HEK293 (cell line): ENCODE measurements at regions of chr9 and their contacts with region 1.

Region 1: DNA sequence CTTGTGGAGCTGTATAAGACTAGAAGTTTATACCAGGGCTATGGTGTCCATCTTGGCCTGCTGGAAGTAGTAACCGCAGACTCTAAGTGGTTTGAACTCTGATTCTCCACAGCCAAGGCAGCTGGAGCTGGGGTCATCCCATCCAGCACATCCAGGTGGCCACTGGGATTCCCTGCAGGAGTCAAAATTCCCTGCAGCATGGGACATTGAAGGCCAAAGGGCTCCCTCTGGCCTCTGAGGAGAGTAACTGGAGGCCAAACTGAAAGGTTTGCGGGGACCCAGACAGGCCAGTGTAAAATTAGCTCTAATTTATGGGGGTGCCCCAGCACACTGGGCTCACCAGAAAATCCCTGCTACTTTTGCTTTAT is 12.2 kb upstream of the PRXL2C start:
- H3K4me3 ChIP-seq: no peak overlapping the region
- H3K27ac ChIP-seq: no peak overlapping the region
- H3K4me1 ChIP-seq: no peaks in the 10 kb centered on the region
- CTCF ChIP-seq: no peak

Region 2: DNA sequence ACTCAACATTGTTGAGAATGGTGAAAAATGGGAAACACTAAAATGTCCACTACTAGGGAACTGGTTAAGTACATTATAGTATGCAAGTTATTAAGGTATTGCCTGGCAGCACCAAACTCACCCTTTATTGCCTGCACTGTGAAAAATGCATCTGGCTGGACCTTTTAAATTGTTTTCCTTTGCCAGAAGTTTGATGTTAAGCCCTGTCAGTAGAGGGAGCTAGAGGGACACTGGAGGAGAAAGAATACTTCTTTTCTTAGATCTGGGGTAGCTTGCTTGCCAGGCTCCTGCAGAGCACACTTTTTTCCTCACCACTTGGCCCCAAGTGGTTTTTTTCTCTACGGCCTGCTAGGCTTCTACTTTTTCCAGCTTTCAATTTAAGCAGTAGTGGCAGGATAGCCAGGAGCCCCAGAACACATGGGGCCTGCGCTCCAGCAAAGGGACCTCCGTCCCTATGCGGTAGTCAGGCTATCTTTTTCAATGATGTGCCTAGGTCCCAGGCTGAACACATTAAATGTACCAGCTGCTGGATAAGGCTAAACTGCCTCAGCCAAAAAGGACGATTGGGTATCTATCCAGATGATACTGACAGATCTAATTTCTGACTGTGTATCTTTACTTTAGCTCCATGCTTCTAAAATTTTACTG is 225.4 kb before region 1 on chr9:
- CTCF ChIA-PET with region 1: interaction called, 18 read pairs
- POLR2A ChIA-PET with region 1: no interaction called
- H3K4me3 ChIP-seq: no peak overlapping the region
- H3K27ac ChIP-seq: no peak overlapping the region
- H3K4me1 ChIP-seq: no peaks in the 10 kb centered on the region
- CTCF ChIP-seq: no peak

Region 3: GRCh38 chr9:96655198-96655851 is 12.0 kb before region 1 on chr9 and contains the start of gene PRXL2C:
- CTCF ChIA-PET with region 1: interaction called, 34 read pairs
- POLR2A ChIA-PET with region 1: no interaction called
- H3K4me3 ChIP-seq: peak within 1 kb of the TSS; percentile 66
- H3K27ac ChIP-seq: peak within 1 kb of the TSS; percentile 89
- H3K4me1 ChIP-seq: no peaks in the 10 kb centered on the region
- CTCF ChIP-seq: no peak